ENCODE measurements at regions of chr22 and their contacts with region 1.

Region 1: GRCh38 chr22:37457093-37457893 is 28.9 kb downstream of the MFNG start:
- DNase-seq: peak; percentile 82 to 88 (median 86)
- ATAC-seq: peak; percentile 87
- H3K4me3 ChIP-seq: no peak overlapping the region
- H3K27ac ChIP-seq: no peak overlapping the region
- H3K4me1 ChIP-seq: peaks cover 12% of the 10 kb centered on the region
- H3K27me3 ChIP-seq: no peaks in the 10 kb centered on the region
- CTCF ChIP-seq: peak; percentile 67 to 96 (median 91)
- POLR2A ChIP-seq: no peak

Region 2: DNA sequence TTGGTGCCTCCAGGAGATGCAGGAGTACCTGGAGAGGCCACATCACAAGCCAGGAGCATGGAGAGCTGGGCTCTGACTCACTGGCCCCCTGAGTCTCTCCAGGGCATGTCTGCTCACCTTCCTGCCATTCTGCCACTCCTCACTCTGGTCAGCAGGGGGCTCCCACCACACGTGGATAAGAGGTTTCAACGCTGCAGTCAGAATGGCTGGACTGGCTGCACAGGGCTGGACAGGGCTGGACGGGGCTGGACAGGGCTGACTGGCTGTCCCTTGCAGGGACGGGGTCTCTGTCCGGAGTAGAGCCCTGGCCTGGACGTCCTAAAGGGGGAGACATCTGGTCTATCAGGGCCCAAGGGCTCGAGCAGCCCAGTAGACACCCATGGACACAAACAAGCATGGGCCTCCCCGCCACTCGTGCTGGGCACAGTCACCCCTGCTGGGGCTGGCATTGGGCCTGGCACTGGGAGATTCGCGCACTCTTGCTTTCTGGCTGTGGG is 140.4 kb before region 1 on chr22:
- intact Hi-C with region 1: loop called (anchors 5 kb)
- DNase-seq: peak; percentile 80 to 87 (median 84)
- ATAC-seq: peak; percentile 90
- H3K4me3 ChIP-seq: no peak overlapping the region
- H3K27ac ChIP-seq: no peak overlapping the region
- H3K4me1 ChIP-seq: no peaks in the 10 kb centered on the region
- H3K27me3 ChIP-seq: no peaks in the 10 kb centered on the region
- CTCF ChIP-seq: peak; percentile 82 to 97 (median 94)
- POLR2A ChIP-seq: no peak

Region 3: DNA sequence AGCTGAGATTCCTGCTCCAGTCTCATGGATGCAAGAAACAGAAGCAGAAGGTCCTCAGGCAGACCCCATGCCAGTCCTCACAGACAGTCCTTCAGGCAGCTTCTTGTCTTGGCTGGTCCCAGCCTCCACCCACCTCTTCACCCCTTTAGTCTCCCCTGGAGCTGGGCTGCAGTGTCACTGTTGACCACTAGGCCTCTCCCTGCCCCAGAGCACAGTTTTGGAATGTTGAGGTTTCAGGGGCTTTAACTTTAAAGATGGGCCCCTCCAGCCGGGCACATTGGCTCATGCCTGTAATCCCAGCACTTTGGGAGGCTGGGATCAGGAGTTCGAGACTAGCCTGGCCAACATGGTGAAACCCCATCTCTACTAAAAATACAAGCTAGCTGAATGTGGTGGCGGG is 311.0 kb after region 1 on chr22:
- intact Hi-C with region 1: no loop called
- DNase-seq: no peak
- ATAC-seq: no peak
- H3K4me3 ChIP-seq: no peak overlapping the region
- H3K27ac ChIP-seq: no peak overlapping the region
- H3K4me1 ChIP-seq: no peaks in the 10 kb centered on the region
- H3K27me3 ChIP-seq: no peaks in the 10 kb centered on the region
- CTCF ChIP-seq: peak in 1 of 7 experiments; percentile 4
- POLR2A ChIP-seq: no peak

Measured in body of pancreas (tissue), 4 donors.